K562 (cell line): ENCODE measurements at regions of chr1 and their contacts with region 1.

Region 1: GRCh38 chr1:145837656-145838055 is 7.8 kb upstream of the NUDT17 start:
- DNase-seq: no peak
- ATAC-seq: no peak
- H3K4me3 ChIP-seq: no peak overlapping the region
- H3K27ac ChIP-seq: no peak overlapping the region
- H3K4me1 ChIP-seq: no peaks in the 10 kb centered on the region
- H3K27me3 ChIP-seq: no peaks in the 10 kb centered on the region
- CTCF ChIP-seq: no peak
- EP300 ChIP-seq: no peak
- POLR2A ChIP-seq: no peak
- RAD21 ChIP-seq: no peak

Region 2: GRCh38 chr1:145688328-145688727 is 149.3 kb before region 1 on chr1:
- CTCF ChIA-PET with region 1: no interaction called
- POLR2A ChIA-PET with region 1: no interaction called
- in situ Hi-C with region 1: no loop called
- intact Hi-C with region 1: no loop called
- DNase-seq: no peak
- ATAC-seq: no peak
- H3K4me3 ChIP-seq: no peak overlapping the region
- H3K27ac ChIP-seq: no peak overlapping the region
- H3K4me1 ChIP-seq: no peaks in the 10 kb centered on the region
- H3K27me3 ChIP-seq: no peaks in the 10 kb centered on the region
- CTCF ChIP-seq: no peak
- EP300 ChIP-seq: no peak
- POLR2A ChIP-seq: no peak
- RAD21 ChIP-seq: no peak

Region 3: GRCh38 chr1:145858894-145859490 is 21.3 kb after region 1 on chr1 and contains the start of gene PIAS3:
- CTCF ChIA-PET with region 1: no interaction called
- POLR2A ChIA-PET with region 1: interaction called, 12 read pairs
- in situ Hi-C with region 1: no loop called
- intact Hi-C with region 1: no loop called
- DNase-seq: peak; percentile 94 to 97 (median 96)
- ATAC-seq: peak; percentile 95
- H3K4me3 ChIP-seq: peak within 1 kb of the TSS; percentile 82
- H3K27ac ChIP-seq: peak within 1 kb of the TSS; percentile 73
- H3K4me1 ChIP-seq: peaks cover 10 to 18% of the 10 kb centered on the region in 2 experiments; a peak in 4 of 5 replicates
- H3K27me3 ChIP-seq: no peaks in the 10 kb centered on the region
- CTCF ChIP-seq: no peak
- EP300 ChIP-seq: no peak
- POLR2A ChIP-seq: peak; percentile 67
- RAD21 ChIP-seq: no peak
- polyA plus RNA-seq, gene PIAS3: 1.1 to 1.5 TPM